MCF 10A (cell line): ENCODE measurements at regions of chr9 and their contacts with region 1.

Region 1: DNA sequence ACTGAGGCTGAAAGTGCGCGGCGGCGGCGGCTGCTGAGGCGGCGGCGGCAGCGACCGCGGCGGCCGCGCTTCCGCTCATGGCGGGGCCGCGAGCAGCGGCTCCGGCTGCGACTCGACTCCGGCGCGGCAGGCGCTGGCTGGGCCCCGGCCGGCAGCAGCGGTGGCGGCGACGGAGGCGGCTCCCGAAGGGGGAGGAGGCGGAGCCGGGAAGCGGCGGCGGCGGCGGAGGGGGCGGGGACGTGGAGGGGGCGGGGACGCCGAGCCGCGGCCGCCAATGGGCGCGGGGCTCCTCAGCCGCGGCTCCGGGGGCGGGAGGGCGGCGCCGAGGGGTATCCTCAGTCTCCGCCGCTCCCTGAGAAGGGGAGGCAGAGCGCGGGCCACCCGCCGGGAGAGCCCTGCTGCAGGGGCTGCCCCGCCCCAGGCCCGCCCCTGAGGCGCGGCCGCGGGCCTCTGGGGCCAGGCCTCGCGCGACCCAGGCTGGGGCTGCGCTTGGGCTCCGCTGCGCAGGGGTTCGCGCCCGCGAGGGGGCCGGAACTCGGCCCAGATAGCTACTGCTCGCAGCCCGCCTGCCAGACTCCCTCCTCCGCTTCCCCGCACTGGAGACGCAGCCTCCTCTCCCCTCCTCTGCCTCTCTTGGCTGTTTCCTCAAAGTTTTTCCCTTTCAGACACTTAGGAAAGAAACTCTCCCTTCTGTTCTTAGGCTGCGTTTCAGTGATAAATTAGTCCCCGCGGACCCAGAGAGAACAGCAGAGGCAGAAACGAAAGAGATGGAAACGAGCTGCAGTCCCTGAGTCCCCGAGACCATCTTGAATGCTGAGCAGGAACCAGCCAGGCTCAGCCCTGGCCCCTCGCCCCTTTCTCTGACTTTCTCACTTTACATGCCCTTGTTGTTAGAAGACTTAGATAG is 85.0 kb upstream of the MELK start:
- DNase-seq: peak; percentile 88
- H3K4me3 Mint-ChIP-seq: peak overlapping the region; percentile 77
- H3K27ac Mint-ChIP-seq: peak overlapping the region; percentile 80
- H3K4me1 Mint-ChIP-seq: peaks cover 7% of the 10 kb centered on the region
- H3K27me3 Mint-ChIP-seq: no peaks in the 10 kb centered on the region
- CTCF ChIP-seq: no peak

Region 2: GRCh38 chr9:36470643-36471290 is 17.0 kb before region 1 on chr9:
- CTCF ChIA-PET with region 1: interaction called, 3 read pairs
- POLR2A ChIA-PET with region 1: interaction called, 11 read pairs
- intact Hi-C with region 1: no loop called
- DNase-seq: peak; percentile 62
- H3K4me3 Mint-ChIP-seq: peak overlapping the region; percentile 68
- H3K27ac Mint-ChIP-seq: peak overlapping the region; percentile 81
- H3K4me1 Mint-ChIP-seq: peaks cover 20% of the 10 kb centered on the region
- H3K27me3 Mint-ChIP-seq: no peaks in the 10 kb centered on the region
- CTCF ChIP-seq: no peak

Region 3: DNA sequence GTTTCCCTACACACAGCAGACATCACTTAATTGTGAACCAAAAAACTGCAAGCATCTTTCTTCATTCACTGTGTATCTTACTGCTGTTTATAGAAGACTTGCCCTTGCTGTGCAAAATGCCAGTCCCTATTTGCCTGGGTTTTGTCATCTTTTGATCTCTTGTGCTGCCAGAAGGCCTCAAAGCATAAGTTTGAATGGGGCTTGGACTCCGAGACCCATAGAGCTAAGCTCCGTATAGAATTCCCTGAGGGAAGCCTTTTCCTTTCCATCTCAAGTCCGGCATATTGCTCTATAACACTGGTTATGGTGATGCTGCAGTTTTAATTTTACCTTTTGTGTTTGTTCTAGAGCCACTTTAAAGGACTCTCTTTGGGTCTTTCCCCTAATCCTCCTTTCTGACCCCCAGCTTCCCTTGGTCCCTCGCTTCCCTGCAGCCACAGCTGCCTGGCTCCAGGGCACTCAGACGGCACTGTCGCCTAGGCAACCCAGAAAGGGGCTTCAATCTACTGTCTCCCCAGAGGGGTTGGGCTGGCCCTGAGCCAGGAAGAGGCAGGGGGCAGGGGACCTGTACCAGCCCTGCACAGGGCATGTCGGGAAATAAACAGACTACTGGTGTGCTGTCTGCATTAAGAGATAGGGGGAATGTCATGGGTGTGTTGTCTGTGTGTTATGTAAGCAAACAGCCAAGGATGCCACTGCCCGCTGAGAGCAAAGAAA is 11.6 kb after region 1 on chr9:
- CTCF ChIA-PET with region 1: no interaction called
- POLR2A ChIA-PET with region 1: interaction called, 10 read pairs
- intact Hi-C with region 1: no loop called
- DNase-seq: no peak
- H3K4me3 Mint-ChIP-seq: no peak overlapping the region
- H3K27ac Mint-ChIP-seq: no peak overlapping the region
- H3K4me1 Mint-ChIP-seq: no peaks in the 10 kb centered on the region
- H3K27me3 Mint-ChIP-seq: peaks cover 8% of the 10 kb centered on the region
- CTCF ChIP-seq: no peak

Region 4: GRCh38 chr9:36543916-36544315 is 56.2 kb after region 1 on chr9:
- CTCF ChIA-PET with region 1: no interaction called
- POLR2A ChIA-PET with region 1: interaction called, 12 read pairs
- intact Hi-C with region 1: no loop called
- DNase-seq: peak; percentile 78
- H3K4me3 Mint-ChIP-seq: no peak overlapping the region
- H3K27ac Mint-ChIP-seq: peak overlapping the region; percentile 81
- H3K4me1 Mint-ChIP-seq: peaks cover 10% of the 10 kb centered on the region
- H3K27me3 Mint-ChIP-seq: peaks cover 19% of the 10 kb centered on the region
- CTCF ChIP-seq: no peak

Region 5: DNA sequence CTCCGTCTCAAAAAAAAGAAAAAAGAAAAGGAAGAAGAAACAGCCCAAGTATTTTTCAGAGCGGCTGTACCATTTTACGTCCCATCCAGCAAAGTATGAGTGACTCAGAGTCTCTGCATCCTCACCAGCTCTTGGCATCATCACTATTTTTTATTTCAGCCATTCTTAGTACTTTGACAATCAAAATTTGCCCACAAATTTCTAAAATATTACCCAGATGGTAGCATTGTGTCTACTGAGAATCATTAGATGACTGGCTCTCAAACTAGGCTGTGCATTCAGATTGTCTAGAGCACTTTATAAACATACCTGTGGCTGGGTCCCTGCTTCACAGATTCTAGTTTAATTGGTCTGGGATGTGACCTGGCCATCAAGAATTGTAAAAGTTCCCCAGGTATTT is 63.4 kb after region 1 on chr9:
- CTCF ChIA-PET with region 1: interaction called, 8 read pairs
- POLR2A ChIA-PET with region 1: interaction called, 5 read pairs
- intact Hi-C with region 1: loop called (anchors 1 kb)
- DNase-seq: no peak
- H3K4me3 Mint-ChIP-seq: no peak overlapping the region
- H3K27ac Mint-ChIP-seq: no peak overlapping the region
- H3K4me1 Mint-ChIP-seq: peaks cover 5% of the 10 kb centered on the region
- H3K27me3 Mint-ChIP-seq: peaks cover 24% of the 10 kb centered on the region
- CTCF ChIP-seq: no peak